ENCODE measurements at regions of chr2 and their contacts with region 1.

Region 1: GRCh38 chr2:181742922-181743722 is 62.8 kb upstream of the NEUROD1 start:
- DNase-seq: no peak
- ATAC-seq: peak; percentile 76

Region 2: DNA sequence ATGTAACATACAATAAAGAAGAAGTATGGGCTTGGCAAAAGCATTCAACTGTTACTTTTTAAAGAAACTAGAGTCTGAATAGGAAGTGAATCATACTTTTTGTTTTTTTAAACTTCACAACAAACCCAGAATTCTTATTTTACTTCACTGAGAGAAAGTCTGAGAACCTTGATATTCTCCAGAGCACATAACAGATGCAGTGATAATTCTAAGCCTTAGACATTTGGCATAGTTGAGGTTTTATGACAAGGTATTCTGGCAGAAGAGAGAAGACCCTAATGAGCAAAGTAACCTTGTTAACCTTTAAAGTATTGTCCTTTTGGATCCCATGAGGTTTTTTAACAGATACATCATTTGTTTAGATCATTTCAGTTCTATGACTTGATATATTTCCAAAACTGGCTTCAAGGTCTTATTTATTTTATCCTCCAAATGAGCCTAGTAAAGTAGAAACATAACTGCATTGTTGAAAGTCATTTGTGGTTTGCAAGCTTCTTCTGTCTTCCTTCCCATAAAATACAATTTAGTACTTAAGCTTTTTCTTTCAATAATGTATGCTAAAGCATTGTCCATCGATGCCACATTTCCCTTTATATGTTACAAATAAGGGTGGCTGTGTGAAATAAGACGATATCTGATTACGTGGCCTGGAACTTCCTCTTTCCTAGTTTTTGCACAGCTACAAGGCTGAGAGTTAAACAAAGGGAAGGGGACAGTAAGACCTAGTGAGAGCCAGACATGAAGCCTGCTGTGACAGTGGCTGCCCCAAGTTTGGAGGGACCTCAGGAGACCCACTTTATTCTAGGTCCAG is 62.3 kb after region 1 on chr2:
- intact Hi-C with region 1: no loop called
- DNase-seq: no peak
- ATAC-seq: peak; percentile 45

Region 3: GRCh38 chr2:181904022-181904632 is 161.0 kb after region 1 on chr2:
- intact Hi-C with region 1: loop called (anchors 10 kb)
- DNase-seq: no peak
- ATAC-seq: no peak

Region 4: GRCh38 chr2:182077451-182078142 is 334.5 kb after region 1 on chr2:
- intact Hi-C with region 1: loop called (anchors 10 kb)
- DNase-seq: no peak
- ATAC-seq: peak; percentile 97